HepG2 (cell line): ENCODE measurements at regions of chr15 and their contacts with region 1.

Region 1: GRCh38 chr15:42650208-42651066 is 75.0 kb downstream of the STARD9 start:
- DNase-seq: peak; percentile 63
- ATAC-seq: peak; percentile 98
- H3K4me3 ChIP-seq: no peak overlapping the region
- H3K27ac ChIP-seq: no peak overlapping the region
- H3K4me1 ChIP-seq: peaks cover 9% of the 10 kb centered on the region
- H3K27me3 ChIP-seq: no peaks in the 10 kb centered on the region
- CTCF ChIP-seq: peak; percentile 82
- EP300 ChIP-seq: no peak
- POLR2A ChIP-seq: no peak
- RAD21 ChIP-seq: peak; percentile 75

Region 2: GRCh38 chr15:42474827-42475226 is 175.6 kb before region 1 on chr15:
- CTCF ChIA-PET with region 1: no interaction called
- POLR2A ChIA-PET with region 1: no interaction called
- in situ Hi-C with region 1: no loop called
- intact Hi-C with region 1: loop called (anchors 1 kb)
- DNase-seq: no peak
- ATAC-seq: no peak
- H3K4me3 ChIP-seq: no peak overlapping the region
- H3K27ac ChIP-seq: no peak overlapping the region
- H3K4me1 ChIP-seq: no peaks in the 10 kb centered on the region
- H3K27me3 ChIP-seq: no peaks in the 10 kb centered on the region
- CTCF ChIP-seq: no peak
- EP300 ChIP-seq: no peak
- POLR2A ChIP-seq: no peak
- RAD21 ChIP-seq: no peak

Region 3: GRCh38 chr15:42548253-42549031 is 102.0 kb before region 1 on chr15 and contains the starts of genes HAUS2 and LRRC57:
- CTCF ChIA-PET with region 1: no interaction called
- POLR2A ChIA-PET with region 1: no interaction called
- in situ Hi-C with region 1: no loop called
- intact Hi-C with region 1: loop called (anchors 5 kb)
- DNase-seq: peak; percentile 77
- ATAC-seq: peak; percentile 95
- H3K4me3 ChIP-seq: peak within 1 kb of the TSS; percentile 87 to 96 (median 96)
- H3K27ac ChIP-seq: peak within 1 kb of the TSS; percentile 68
- H3K4me1 ChIP-seq: peaks cover 45% of the 10 kb centered on the region
- H3K27me3 ChIP-seq: no peaks in the 10 kb centered on the region; a peak in 1 of 5 replicates
- CTCF ChIP-seq: no peak
- EP300 ChIP-seq: no peak
- POLR2A ChIP-seq: peak; percentile 87 to 94
- RAD21 ChIP-seq: no peak
- total RNA-seq, gene HAUS2: 32.9 and 49.4 TPM in 2 replicates
- total RNA-seq, gene LRRC57: 14.8 and 26.0 TPM in 2 replicates

Region 4: GRCh38 chr15:42591238-42591934 is 59.1 kb before region 1 on chr15:
- CTCF ChIA-PET with region 1: no interaction called
- POLR2A ChIA-PET with region 1: no interaction called
- in situ Hi-C with region 1: no loop called
- intact Hi-C with region 1: loop called (anchors 5 kb)
- DNase-seq: peak; percentile 84
- ATAC-seq: peak; percentile 93
- H3K4me3 ChIP-seq: peak overlapping the region in 2 of 3 experiments; percentile 22 to 31; a peak in 1 of 6 replicates
- H3K27ac ChIP-seq: peak overlapping the region; percentile 89
- H3K4me1 ChIP-seq: peaks cover 31% of the 10 kb centered on the region
- H3K27me3 ChIP-seq: no peaks in the 10 kb centered on the region
- CTCF ChIP-seq: peak; percentile 53
- EP300 ChIP-seq: 0 out of 4 replicates have a peak, but pooled peaks of 1 of the 2 experiments have one; percentile 13
- POLR2A ChIP-seq: no peak
- RAD21 ChIP-seq: no peak